Transverse colon (tissue), 4 donors: ENCODE measurements at regions of chr14 and their contacts with region 1.

Region 1: DNA sequence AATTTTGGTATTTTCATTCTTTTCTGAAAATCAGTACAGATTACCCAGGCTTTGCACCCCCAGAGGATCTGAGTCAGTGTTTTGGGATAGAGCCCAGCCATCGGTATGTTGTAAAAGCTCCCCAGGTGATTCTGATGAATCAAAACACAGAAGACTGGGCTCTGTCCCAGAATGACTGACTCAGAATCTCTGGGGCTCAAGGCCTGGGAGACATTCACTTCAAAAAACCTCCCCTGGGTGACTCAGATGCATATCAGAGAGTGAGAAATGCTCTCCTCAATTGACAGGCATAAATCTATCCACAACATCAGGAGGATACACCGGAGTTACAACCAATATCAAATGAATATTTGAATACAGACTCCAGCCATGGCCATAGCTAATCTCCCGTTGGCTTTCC is 32.6 kb downstream of the SLC35F4 start:
- DNase-seq: no peak
- H3K4me3 ChIP-seq: no peak overlapping the region
- H3K27ac ChIP-seq: no peak overlapping the region
- H3K4me1 ChIP-seq: no peaks in the 10 kb centered on the region
- H3K27me3 ChIP-seq: no peaks in the 10 kb centered on the region
- CTCF ChIP-seq: no peak
- EP300 ChIP-seq: no peak
- POLR2A ChIP-seq: no peak

Region 2: DNA sequence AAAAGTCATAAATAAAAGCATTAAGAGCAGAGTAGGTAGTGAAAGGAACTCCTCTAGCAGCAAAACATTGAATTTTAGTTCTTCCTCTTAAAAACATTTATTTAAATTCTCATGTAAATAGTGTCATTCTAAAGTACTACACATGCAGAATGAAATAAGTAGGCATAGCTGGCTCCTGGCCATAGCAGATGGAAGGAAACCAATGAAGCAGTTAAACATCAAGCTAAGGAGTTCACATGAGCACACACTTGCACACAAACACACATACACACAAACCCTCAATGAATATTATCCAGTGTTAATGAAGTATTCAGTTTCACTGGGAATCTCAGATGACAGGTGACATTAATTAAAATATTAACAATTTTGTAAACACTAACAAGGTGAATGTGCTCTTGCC is 36.8 kb before region 1 on chr14:
- in situ Hi-C with region 1: no loop called
- intact Hi-C with region 1: loop called (anchors 1 kb)
- DNase-seq: no peak
- H3K4me3 ChIP-seq: no peak overlapping the region
- H3K27ac ChIP-seq: no peak overlapping the region
- H3K4me1 ChIP-seq: no peaks in the 10 kb centered on the region
- H3K27me3 ChIP-seq: no peaks in the 10 kb centered on the region
- CTCF ChIP-seq: no peak
- EP300 ChIP-seq: no peak
- POLR2A ChIP-seq: no peak